Mammary epithelial cell (primary cell): ENCODE measurements at regions of chr12 and their contacts with region 1.

Region 1: DNA sequence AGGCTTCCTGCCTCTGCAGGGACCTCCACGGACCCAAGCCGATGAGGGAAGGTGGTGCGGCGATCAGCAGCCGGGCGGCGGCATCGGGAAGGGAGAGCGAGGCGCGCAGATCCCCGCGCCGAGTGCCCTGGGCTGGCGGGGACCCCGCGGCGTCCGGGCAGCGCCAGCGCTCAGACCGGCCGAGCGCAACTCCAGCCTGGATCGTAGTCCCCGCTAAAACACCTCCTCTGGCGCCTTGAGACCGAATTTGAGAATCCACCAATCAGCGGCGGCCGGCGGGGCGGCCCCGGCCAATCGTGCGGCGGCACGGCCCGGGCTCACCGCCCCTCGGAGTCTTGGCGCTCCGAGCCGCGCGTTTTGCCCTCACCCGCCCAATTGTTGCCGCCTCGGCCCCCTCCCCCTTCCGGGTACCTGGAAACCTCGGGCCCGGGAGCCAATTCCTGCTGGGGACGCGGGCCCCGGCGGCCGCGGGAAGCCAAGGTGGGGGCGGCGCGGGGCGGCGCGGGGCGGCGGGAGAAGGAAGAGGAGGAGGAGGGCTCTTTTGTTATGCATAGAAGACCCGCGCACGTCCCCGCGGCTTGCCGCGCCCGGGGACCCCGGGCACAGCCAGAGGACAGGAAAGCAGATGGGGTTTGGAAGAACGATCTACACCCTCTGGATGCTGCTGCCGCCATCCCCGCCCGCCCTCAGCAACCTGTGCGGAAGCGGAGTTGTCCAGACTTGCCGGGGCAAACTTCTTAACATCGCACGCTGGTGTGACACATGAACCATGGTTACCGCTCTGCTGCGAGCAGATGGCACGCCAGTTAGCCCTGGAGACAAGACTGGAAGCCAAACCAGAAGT is at the start of gene E2F7:
- DNase-seq: peak; percentile 96
- H3K4me3 ChIP-seq: peak within 1 kb of the TSS; percentile 69 to 94 (median 81)
- H3K27ac ChIP-seq: peak within 1 kb of the TSS; percentile 96
- H3K4me1 ChIP-seq: peaks cover 8% of the 10 kb centered on the region
- H3K27me3 ChIP-seq: no peaks in the 10 kb centered on the region
- CTCF ChIP-seq: no peak
- total RNA-seq, gene E2F7: 5.7 to 35.4 TPM

Region 2: DNA sequence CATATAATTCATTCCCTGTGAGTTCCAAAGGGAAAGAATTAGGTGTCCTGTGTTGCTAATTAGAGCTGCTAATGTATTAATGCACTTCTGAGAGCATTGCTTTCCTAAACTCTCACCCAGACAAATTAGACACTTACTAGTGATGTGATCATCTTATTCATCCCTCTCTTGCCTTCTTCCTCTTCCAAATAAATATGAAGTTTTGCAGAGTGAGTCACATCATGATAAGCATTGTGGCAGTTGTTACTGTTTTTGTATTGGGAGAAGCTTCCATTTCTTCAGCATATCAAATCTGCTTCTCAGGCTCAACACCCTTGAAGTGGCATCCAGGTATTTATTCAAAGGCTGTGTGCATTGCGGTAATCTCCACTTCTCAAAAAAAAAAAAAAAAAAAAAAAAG is 37.1 kb after region 1 on chr12:
- CTCF ChIA-PET with region 1: no interaction called
- dilution Hi-C with region 1: no loop called
- in situ Hi-C with region 1: no loop called
- intact Hi-C with region 1: loop called (anchors 5 kb)
- DNase-seq: peak; percentile 59
- H3K4me3 ChIP-seq: no peak overlapping the region
- H3K27ac ChIP-seq: no peak overlapping the region
- H3K4me1 ChIP-seq: peaks cover 19% of the 10 kb centered on the region
- H3K27me3 ChIP-seq: no peaks in the 10 kb centered on the region
- CTCF ChIP-seq: no peak

Region 3: DNA sequence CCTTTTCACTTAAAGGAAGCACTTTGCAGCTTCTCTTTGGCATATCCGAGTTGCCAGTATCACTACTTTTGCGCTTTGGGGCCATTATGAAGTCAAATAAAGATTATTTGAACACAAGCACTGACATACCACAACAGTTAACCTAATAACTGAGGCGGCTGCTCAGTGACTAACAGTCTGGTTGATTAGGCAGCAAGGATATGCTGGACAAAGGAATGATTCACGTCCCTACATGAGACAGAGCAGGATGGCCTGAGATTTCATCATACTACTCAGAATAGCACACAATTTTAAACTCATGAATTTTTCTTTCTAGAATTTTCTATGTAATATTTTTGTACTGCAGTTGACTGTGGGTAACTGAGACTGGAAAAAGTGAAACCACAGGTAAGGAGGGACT is 56.7 kb after region 1 on chr12:
- CTCF ChIA-PET with region 1: no interaction called
- dilution Hi-C with region 1: no loop called
- in situ Hi-C with region 1: loop called in 1 of 2 experiments (anchors 5 kb)
- intact Hi-C with region 1: loop called (anchors 1 kb)
- DNase-seq: peak; percentile 92
- H3K4me3 ChIP-seq: no peak overlapping the region
- H3K27ac ChIP-seq: peak overlapping the region; percentile 92
- H3K4me1 ChIP-seq: peaks cover 39% of the 10 kb centered on the region
- H3K27me3 ChIP-seq: no peaks in the 10 kb centered on the region
- CTCF ChIP-seq: no peak

Region 4: DNA sequence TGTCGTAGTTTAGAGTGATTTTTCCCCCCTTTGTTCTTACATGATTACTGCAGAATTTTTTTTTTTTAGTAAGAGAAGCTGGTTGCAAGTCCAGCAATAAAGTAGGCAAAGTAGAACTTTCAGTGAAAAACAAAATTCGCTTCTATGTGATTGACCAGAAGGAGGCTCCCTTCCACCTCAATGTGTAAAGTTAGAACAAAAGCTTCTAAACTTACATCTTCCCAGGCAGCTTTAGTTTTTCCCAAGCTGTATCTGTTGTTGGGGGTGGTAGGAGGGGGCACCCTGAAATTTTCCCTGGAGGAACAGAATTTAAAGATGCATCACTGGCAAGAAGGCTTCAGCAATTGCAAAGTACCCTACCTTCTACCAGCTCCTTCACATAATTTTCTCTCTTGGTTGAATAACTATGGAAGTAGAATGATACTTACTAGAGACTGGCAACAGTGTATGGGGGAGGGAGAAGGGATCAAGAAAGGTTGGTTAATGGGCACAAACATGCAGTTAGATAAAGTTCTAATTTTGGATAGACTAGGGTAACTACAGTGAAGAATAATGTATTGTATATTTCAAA is 87.1 kb after region 1 on chr12:
- CTCF ChIA-PET with region 1: no interaction called
- dilution Hi-C with region 1: no loop called
- in situ Hi-C with region 1: no loop called
- intact Hi-C with region 1: loop called (anchors 1 kb)
- DNase-seq: peak; percentile 19
- H3K4me3 ChIP-seq: no peak overlapping the region
- H3K27ac ChIP-seq: no peak overlapping the region
- H3K4me1 ChIP-seq: peaks cover 6% of the 10 kb centered on the region
- H3K27me3 ChIP-seq: no peaks in the 10 kb centered on the region
- CTCF ChIP-seq: peak; percentile 48 to 70

Region 5: GRCh38 chr12:77685112-77685511 is 619.5 kb after region 1 on chr12:
- CTCF ChIA-PET with region 1: no interaction called
- dilution Hi-C with region 1: no loop called
- in situ Hi-C with region 1: no loop called
- intact Hi-C with region 1: loop called (anchors 1 kb)
- DNase-seq: peak; percentile 60
- H3K4me3 ChIP-seq: peak overlapping the region in 1 of 3 experiments; percentile 25
- H3K27ac ChIP-seq: no peak overlapping the region
- H3K4me1 ChIP-seq: peaks cover 3% of the 10 kb centered on the region
- H3K27me3 ChIP-seq: no peaks in the 10 kb centered on the region
- CTCF ChIP-seq: peak; percentile 62 to 77